Activated CD4-positive, alpha-beta T cell treated with anti-CD3 and anti-CD28 coated beads, Interleukin-2, amount 10 ng/mL, durations not matched to agents 24 days and 14 days (primary cell): ENCODE measurements at regions of chr2 and their contacts with region 1.

Region 1: GRCh38 chr2:48343571-48344440 is 186.1 kb upstream of the STON1 start:
- DNase-seq: peak; percentile 77
- H3K4me3 Mint-ChIP-seq: peak overlapping the region; percentile 63
- H3K27ac Mint-ChIP-seq: peak overlapping the region; percentile 86
- H3K4me1 Mint-ChIP-seq: peaks cover 31% of the 10 kb centered on the region
- H3K27me3 Mint-ChIP-seq: no peaks in the 10 kb centered on the region

Region 2: DNA sequence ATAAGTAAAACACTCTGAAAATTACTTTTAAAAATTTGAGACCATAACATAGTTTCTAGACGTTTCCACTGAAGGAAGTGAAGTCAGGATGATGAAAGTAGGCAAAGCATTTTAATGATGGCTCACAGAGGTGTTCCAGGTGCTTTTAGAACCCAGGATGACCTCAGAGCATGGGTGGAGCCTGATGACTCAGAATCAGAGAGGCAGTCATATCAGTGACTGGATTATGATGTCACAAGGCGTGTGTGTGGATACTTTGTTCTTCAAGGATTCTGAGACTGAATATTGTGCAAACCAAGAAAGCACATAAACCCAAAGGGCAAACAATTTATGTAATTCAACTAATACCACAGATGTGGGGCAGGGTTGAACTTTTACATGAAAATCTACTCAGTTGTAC is 229.6 kb before region 1 on chr2:
- intact Hi-C with region 1: loop called (anchors 1 kb)
- DNase-seq: peak; percentile 84
- H3K4me3 Mint-ChIP-seq: no peak overlapping the region
- H3K27ac Mint-ChIP-seq: no peak overlapping the region
- H3K4me1 Mint-ChIP-seq: peaks cover 26% of the 10 kb centered on the region
- H3K27me3 Mint-ChIP-seq: peaks cover 1% of the 10 kb centered on the region

Region 3: DNA sequence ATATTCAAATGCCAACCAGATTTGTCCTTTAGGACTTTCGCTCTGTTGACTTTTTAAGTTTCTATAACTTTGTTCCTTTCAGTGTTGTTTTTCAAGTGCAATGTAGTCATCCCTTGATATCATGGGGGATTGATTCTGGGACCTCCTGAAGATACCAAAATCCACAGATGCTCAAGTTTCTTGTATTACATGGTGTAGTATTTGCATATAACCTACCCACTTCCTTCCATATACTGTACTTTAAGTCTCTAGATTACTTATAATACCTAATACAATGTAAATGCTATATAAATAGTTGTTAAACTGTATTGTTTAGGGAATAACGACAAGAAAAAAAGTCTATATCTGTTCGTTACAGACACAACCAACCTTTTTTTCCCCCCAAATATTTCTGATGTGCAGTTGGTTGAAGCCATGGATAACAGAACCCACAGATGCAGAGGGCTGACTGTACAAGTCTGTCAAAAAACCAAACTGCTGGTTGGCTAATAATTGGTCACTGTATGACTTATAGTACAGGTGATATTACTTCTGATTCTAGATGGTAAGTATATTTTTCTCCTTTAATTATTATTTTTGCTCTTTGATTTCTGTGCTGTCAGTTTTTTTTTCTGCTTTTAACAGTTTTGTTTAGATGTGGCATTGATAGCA is 15.5 kb before region 1 on chr2:
- intact Hi-C with region 1: loop called (anchors 2 kb)
- DNase-seq: no peak
- H3K4me3 Mint-ChIP-seq: no peak overlapping the region
- H3K27ac Mint-ChIP-seq: no peak overlapping the region
- H3K4me1 Mint-ChIP-seq: peaks cover 43% of the 10 kb centered on the region
- H3K27me3 Mint-ChIP-seq: no peaks in the 10 kb centered on the region

Region 4: DNA sequence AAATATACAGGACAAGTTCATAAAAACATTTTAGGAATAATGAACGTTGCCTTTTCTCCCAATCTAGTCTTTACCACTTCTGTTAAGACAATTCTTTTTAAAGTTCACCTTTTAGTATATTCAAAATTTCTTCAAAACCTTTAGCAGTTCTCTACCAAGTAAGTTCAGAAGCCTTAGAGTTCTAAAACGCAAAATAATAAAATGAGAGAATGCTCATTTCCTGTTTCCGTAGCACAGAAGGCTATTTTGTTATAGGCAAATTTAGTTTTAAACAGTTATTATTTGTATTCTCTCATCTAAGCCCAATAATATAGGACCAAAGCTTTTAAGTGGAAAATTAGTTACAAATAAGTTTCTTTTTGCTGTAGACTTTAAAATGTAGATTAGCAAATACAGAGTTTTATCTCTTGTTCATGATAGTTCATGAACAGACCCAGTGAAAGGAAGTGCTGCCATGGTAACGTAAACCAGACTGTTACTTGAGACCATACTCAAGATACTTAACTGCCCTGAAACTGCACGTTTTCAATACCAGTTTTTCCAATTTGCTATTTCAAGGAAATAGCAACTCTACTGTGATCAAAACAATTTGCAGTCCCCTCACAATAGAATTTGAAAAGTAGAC is 13.0 kb after region 1 on chr2:
- intact Hi-C with region 1: loop called (anchors 1 kb)
- DNase-seq: peak; percentile 85
- H3K4me3 Mint-ChIP-seq: peak overlapping the region; percentile 75
- H3K27ac Mint-ChIP-seq: peak overlapping the region; percentile 94
- H3K4me1 Mint-ChIP-seq: peaks cover 48% of the 10 kb centered on the region
- H3K27me3 Mint-ChIP-seq: no peaks in the 10 kb centered on the region

Region 5: GRCh38 chr2:48412443-48413250 is 68.8 kb after region 1 on chr2:
- intact Hi-C with region 1: loop called (anchors 2 kb)
- DNase-seq: no peak
- H3K4me3 Mint-ChIP-seq: no peak overlapping the region
- H3K27ac Mint-ChIP-seq: no peak overlapping the region
- H3K4me1 Mint-ChIP-seq: peaks cover 20% of the 10 kb centered on the region
- H3K27me3 Mint-ChIP-seq: no peaks in the 10 kb centered on the region

Region 6: DNA sequence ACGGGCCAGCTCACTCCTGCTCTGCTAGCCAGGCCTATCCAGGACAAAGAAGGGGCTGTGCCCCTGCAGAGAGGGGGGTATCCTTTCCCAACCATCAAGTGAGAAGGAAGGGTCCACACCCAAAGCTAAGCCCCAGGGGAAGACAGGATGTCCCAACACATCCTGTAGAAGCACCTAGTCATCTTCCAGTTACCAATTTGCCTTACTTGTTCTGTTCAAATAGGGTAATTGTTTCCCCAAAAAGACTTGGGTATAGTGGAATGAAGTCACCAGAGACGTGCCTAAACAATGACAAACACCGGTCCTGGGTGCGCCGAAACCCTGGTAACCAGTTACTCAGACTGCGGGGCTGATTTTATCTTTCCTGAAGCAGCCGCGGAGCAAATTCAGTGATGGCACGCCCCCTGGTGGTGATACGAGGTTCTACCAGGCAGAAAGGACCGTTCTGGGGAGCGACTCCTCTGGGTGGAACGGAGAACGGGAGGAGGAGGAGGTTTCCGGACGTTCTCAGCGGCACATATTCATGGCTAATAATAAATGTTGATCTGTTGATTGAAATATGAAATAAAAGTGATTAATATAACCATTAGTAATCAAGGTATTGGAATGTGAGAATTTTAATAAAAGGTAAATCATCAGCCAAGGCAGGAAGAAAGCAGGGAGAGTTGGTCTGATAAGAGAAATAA is 76.8 kb after region 1 on chr2:
- intact Hi-C with region 1: loop called (anchors 1 kb)
- DNase-seq: peak; percentile 98
- H3K4me3 Mint-ChIP-seq: peak overlapping the region; percentile 41
- H3K27ac Mint-ChIP-seq: peak overlapping the region; percentile 77
- H3K4me1 Mint-ChIP-seq: peaks cover 36% of the 10 kb centered on the region
- H3K27me3 Mint-ChIP-seq: no peaks in the 10 kb centered on the region

Region 7: GRCh38 chr2:49105506-49105905 is 761.7 kb after region 1 on chr2:
- intact Hi-C with region 1: no loop called
- DNase-seq: no peak
- H3K4me3 Mint-ChIP-seq: no peak overlapping the region
- H3K27ac Mint-ChIP-seq: no peak overlapping the region
- H3K4me1 Mint-ChIP-seq: no peaks in the 10 kb centered on the region
- H3K27me3 Mint-ChIP-seq: no peaks in the 10 kb centered on the region